SK-N-SH (cell line): ENCODE measurements at regions of chr17 and their contacts with region 1.

Region 1: GRCh38 chr17:58006924-58007780 is at the start of gene SRSF1:
- DNase-seq: peak; percentile 97
- H3K4me3 ChIP-seq: peak within 1 kb of the TSS; percentile 98 to 99
- H3K27ac ChIP-seq: peak within 1 kb of the TSS; percentile 98 to 99
- H3K4me1 ChIP-seq: peaks cover 33 to 34% of the 10 kb centered on the region in 2 experiments
- H3K27me3 ChIP-seq: no peaks in the 10 kb centered on the region
- CTCF ChIP-seq: no peak
- EP300 ChIP-seq: peak; percentile 10 to 27; a peak in 2 of 4 replicates
- RAD21 ChIP-seq: no peak
- polyA plus RNA-seq, gene SRSF1: 248 and 291 TPM in 2 replicates

Region 2: GRCh38 chr17:57849874-57850754 is 157.0 kb before region 1 on chr17 and contains the start of gene MRPS23:
- CTCF ChIA-PET with region 1: interaction called, 1,002 read pairs
- POLR2A ChIA-PET with region 1: interaction called, 25 read pairs
- DNase-seq: peak; percentile 98
- H3K4me3 ChIP-seq: peak within 1 kb of the TSS; percentile 92 to 98
- H3K27ac ChIP-seq: peak within 1 kb of the TSS; percentile 82 to 93
- H3K4me1 ChIP-seq: peaks cover 0 to 23% of the 10 kb centered on the region in 2 experiments; a peak in 3 of 4 replicates
- H3K27me3 ChIP-seq: no peaks in the 10 kb centered on the region
- CTCF ChIP-seq: no peak
- EP300 ChIP-seq: peak; percentile 35 to 53; a peak in 2 of 4 replicates
- RAD21 ChIP-seq: 0 out of 2 replicates have a peak, but pooled peaks have one; percentile 2
- polyA plus RNA-seq, gene MRPS23: 105 and 108 TPM in 2 replicates

Region 3: GRCh38 chr17:57902800-57903759 is 104.1 kb before region 1 on chr17:
- CTCF ChIA-PET with region 1: interaction called, 4 read pairs
- POLR2A ChIA-PET with region 1: interaction called, 11 read pairs
- DNase-seq: no peak
- H3K4me3 ChIP-seq: no peak overlapping the region
- H3K27ac ChIP-seq: peak overlapping the region; percentile 43 to 86
- H3K4me1 ChIP-seq: peaks cover 49 to 53% of the 10 kb centered on the region in 2 experiments; a peak in 3 of 4 replicates
- H3K27me3 ChIP-seq: no peaks in the 10 kb centered on the region
- CTCF ChIP-seq: no peak
- EP300 ChIP-seq: peak in 1 of 2 experiments; percentile 67; a peak in 1 of 4 replicates
- RAD21 ChIP-seq: no peak

Region 4: GRCh38 chr17:57987580-57988421 is 19.4 kb before region 1 on chr17 and contains the start of gene VEZF1:
- CTCF ChIA-PET with region 1: interaction called, 72 read pairs
- POLR2A ChIA-PET with region 1: interaction called, 10 read pairs
- DNase-seq: peak; percentile 96
- H3K4me3 ChIP-seq: peak within 1 kb of the TSS; percentile 78 to 98
- H3K27ac ChIP-seq: peak within 1 kb of the TSS; percentile 96 to 100
- H3K4me1 ChIP-seq: peaks cover 20 to 47% of the 10 kb centered on the region in 2 experiments
- H3K27me3 ChIP-seq: no peaks in the 10 kb centered on the region
- CTCF ChIP-seq: no peak
- EP300 ChIP-seq: no peak
- RAD21 ChIP-seq: no peak
- polyA plus RNA-seq, gene VEZF1: 35.1 and 43.0 TPM in 2 replicates

Region 5: DNA sequence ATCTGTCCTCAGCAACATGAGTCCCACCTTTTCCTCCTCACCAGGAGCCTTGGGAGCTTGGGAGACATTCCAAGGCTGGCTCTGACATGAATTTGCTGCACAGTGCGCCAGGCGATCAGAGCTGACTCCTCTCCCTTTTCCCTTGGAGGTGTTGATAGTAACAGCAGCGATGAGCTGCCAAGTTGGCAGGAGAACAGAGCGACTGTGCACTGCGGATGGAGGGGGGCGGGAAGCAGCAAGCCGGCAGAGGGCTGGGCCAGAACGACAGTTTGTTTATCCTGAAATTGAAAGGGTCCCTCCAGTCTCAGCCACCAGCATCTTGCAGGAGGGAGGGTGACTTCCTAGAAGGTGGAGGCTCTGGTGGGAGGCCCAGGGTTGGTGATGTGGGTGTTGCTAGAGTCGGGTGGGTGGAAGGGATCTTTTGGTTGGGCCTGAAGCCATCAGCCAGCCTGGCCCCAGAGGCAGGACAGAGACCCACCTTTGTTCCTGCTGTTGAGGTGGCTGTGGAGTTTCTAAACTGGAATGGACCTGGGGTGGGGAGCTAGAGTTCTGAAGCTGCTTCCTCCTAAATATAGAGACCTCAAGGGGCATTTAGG is 53.5 kb after region 1 on chr17:
- CTCF ChIA-PET with region 1: no interaction called
- POLR2A ChIA-PET with region 1: no interaction called
- DNase-seq: no peak
- H3K4me3 ChIP-seq: no peak overlapping the region
- H3K27ac ChIP-seq: no peak overlapping the region
- H3K4me1 ChIP-seq: peaks cover 0 to 7% of the 10 kb centered on the region in 2 experiments; a peak in 1 of 4 replicates
- H3K27me3 ChIP-seq: peaks cover 32% of the 10 kb centered on the region
- CTCF ChIP-seq: no peak
- EP300 ChIP-seq: no peak
- RAD21 ChIP-seq: no peak

Region 6: DNA sequence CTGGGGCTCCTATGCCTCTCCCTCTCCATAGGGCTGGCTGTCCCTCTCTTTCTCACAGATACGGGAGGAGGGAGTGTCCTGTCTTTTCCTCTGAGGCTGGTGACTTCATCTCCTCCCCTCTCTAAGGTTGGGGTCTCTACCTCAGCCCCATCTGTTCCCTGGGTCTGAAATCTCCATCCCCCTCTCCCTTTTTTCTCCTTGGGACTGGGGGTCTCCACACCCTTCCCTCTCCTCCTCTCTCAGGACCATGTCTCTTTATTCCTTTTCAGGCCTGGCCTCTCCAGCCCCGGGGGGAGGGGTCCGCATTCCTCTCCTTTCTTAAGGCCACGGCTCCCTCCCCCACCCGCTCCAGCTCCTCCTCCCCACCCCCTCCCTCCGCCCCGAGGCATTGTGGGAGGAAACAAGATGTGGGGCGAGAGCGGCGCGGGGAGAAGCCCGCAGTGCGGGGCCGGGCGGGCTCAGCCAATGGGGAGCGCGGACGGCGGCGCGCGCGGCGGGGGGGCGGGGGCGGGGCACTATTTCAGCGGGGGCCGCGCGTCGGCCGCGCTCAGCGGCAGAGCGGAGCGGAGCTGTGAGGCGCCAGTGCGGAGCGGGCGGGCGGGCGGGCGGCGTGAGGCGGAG is 75.8 kb after region 1 on chr17 and contains the start of gene DYNLL2:
- CTCF ChIA-PET with region 1: interaction called, 5 read pairs
- POLR2A ChIA-PET with region 1: interaction called, 40 read pairs
- DNase-seq: peak; percentile 99
- H3K4me3 ChIP-seq: peak within 1 kb of the TSS; percentile 95 to 99
- H3K27ac ChIP-seq: peak within 1 kb of the TSS; percentile 48 to 91
- H3K4me1 ChIP-seq: peaks cover 18 to 32% of the 10 kb centered on the region in 2 experiments
- H3K27me3 ChIP-seq: no peaks in the 10 kb centered on the region; the same call in 1 of the 2 replicates
- CTCF ChIP-seq: no peak
- EP300 ChIP-seq: no peak; a peak in 1 of 4 replicates
- RAD21 ChIP-seq: no peak
- polyA plus RNA-seq, gene DYNLL2: 27.0 and 27.4 TPM in 2 replicates

Region 7: DNA sequence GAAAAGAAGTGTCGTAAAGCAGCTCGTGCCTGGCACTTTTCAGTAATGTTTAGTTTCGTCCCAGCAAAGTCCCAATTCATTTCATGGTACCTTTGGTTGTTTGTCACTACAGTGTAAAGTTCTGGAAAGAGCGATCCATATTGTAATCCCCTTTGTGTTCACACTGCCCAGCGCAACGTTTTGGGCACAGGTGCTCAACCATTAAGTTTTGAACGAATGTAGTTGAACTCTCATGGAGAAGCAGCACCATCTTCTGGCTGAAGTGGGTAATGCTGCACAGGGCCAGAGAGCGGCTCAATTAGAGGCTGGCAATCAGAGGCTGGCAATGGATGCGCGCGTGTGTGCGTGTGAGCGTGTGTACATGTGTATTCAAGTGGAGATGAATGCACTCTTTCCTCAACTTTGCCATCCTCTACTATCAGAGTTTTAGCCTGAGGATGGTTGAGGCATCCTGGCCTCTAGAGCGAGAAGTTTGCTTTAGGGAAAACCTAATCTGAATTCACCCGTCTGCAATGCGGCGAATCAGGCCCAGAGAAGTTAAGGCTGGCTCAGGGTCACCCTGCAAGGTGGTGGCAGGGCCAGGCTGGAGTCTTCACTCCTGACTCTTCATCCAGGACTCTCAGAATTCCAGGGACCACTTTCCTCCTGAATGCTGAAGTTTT is 105.9 kb after region 1 on chr17:
- CTCF ChIA-PET with region 1: interaction called, 144 read pairs
- POLR2A ChIA-PET with region 1: interaction called, 4 read pairs
- DNase-seq: peak; percentile 79
- H3K4me3 ChIP-seq: no peak overlapping the region
- H3K27ac ChIP-seq: no peak overlapping the region
- H3K4me1 ChIP-seq: no peaks in the 10 kb centered on the region
- H3K27me3 ChIP-seq: 0 out of 2 replicates have a peak, but pooled peaks cover 18% of the 10 kb centered on the region
- CTCF ChIP-seq: peak; percentile 99
- EP300 ChIP-seq: no peak
- RAD21 ChIP-seq: peak; percentile 99